ENCODE measurements at regions of chr4 and their contacts with region 1.

Region 1: DNA sequence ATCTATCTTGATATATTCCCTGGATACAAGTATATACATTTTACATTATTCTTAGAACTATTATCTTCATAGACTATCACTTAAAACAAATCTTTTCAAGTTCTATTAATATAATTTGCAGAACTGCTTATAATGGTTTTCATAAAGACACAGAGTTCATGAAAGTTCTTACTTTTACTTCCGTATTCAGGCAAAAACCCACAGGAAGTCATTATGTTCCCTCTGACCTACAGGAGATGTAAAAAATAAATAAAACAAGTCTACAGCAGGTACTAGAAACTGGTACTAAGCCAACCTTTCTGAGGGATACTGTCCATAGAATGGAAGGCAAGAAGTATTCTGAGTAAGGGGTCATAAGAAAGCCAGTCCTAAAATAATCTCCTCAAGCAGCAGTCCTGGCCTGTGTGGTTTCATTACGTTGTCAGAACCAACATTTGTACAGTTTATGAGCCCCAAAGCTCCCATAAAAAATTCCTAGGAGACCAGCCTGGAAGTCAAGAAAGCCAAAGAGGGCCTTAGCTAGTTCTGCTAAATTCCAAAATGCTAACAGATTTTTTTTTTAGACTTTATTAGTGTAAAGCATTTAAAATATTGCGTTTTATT is 68.6 kb downstream of the CAMK2D start:
- DNase-seq: no peak
- H3K4me3 ChIP-seq: no peak overlapping the region
- H3K27ac ChIP-seq: peak overlapping the region; percentile 71
- H3K4me1 ChIP-seq: peaks cover 12% of the 10 kb centered on the region
- H3K27me3 ChIP-seq: no peaks in the 10 kb centered on the region
- CTCF ChIP-seq: no peak

Region 2: DNA sequence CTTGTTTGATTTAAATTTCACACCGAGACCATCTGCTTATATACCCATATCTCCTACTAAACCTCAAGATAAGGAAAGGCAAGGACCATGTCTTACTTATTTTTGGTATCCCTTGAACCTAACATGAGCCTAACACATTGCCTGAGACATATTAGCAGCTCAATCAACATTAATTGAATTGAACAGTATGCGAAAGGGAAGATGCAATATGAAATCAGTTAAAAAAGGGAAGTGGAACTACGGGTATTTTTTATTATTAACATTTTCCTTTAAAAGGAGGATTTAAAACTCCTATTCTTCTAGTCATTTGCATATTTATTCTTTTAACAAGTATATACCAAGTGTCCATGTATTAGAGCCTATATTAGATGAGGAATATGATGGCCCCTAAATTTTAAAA is 128.4 kb before region 1 on chr4:
- intact Hi-C with region 1: no loop called
- DNase-seq: no peak
- H3K4me3 ChIP-seq: no peak overlapping the region
- H3K27ac ChIP-seq: no peak overlapping the region
- H3K4me1 ChIP-seq: no peaks in the 10 kb centered on the region
- H3K27me3 ChIP-seq: no peaks in the 10 kb centered on the region
- CTCF ChIP-seq: no peak

Region 3: GRCh38 chr4:113756005-113756410 is 63.1 kb after region 1 on chr4:
- intact Hi-C with region 1: loop called (anchors 10 kb)
- DNase-seq: no peak
- H3K4me3 ChIP-seq: no peak overlapping the region
- H3K27ac ChIP-seq: no peak overlapping the region
- H3K4me1 ChIP-seq: no peaks in the 10 kb centered on the region
- H3K27me3 ChIP-seq: no peaks in the 10 kb centered on the region
- CTCF ChIP-seq: no peak

Measured in colonic mucosa (tissue), 4 donors.